AG04450 (cell line): ENCODE measurements at regions of chr7 and their contacts with region 1.

Region 1: GRCh38 chr7:129258649-129259389 is 34.0 kb downstream of the AHCYL2 start:
- DNase-seq: no peak
- H3K4me3 ChIP-seq: no peak overlapping the region
- H3K27ac ChIP-seq: no peak overlapping the region
- H3K27me3 ChIP-seq: no peaks in the 10 kb centered on the region
- CTCF ChIP-seq: no peak

Region 2: GRCh38 chr7:129176916-129177710 is 81.7 kb before region 1 on chr7:
- CTCF ChIA-PET with region 1: no interaction called
- POLR2A ChIA-PET with region 1: no interaction called
- DNase-seq: no peak
- H3K4me3 ChIP-seq: no peak overlapping the region
- H3K27ac ChIP-seq: no peak overlapping the region
- H3K27me3 ChIP-seq: peaks cover 13% of the 10 kb centered on the region
- CTCF ChIP-seq: no peak

Region 3: GRCh38 chr7:129240119-129240815 is 18.6 kb before region 1 on chr7:
- CTCF ChIA-PET with region 1: no interaction called
- POLR2A ChIA-PET with region 1: no interaction called
- DNase-seq: no peak
- H3K4me3 ChIP-seq: no peak overlapping the region
- H3K27ac ChIP-seq: no peak overlapping the region
- H3K27me3 ChIP-seq: no peaks in the 10 kb centered on the region
- CTCF ChIP-seq: no peak

Region 4: DNA sequence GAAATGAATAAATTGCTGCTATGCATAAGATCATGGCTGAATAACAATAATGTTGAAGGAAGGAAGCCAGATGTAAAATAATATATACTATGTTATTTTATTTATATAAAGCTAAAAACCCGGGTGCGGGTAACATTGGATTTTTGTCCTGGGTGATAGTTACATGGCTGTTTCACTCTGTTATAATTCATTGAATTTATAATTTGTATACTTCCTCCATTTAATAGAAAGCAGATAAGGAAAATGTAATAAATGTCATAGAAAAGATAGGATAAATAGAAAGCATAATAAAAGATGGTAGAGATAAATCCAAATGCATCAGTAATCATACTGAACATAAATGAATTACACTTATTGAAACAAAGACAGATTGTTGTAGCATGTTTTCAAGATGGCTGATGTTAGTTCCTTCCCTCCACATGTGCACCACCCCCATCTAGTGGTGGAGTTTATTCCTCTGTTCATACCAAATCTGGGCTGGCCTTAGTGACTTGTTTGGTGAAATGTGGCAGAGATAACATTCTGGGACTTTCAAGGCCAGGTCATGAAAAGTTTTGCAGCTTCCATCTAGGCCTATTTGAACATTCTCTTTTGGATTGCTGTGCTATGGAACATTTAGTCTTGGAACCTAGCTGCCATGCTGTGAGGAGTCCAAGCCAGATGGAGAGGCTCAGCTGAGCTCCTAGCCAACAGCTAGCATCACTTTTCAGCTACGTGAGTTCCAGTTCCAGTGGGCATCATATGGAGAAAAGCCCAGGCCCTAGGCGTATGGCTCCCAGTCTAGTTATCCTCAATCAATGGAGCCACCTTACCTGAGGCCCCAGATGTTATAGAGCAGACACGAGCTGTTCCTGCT is 12.9 kb after region 1 on chr7:
- CTCF ChIA-PET with region 1: interaction called, 14 read pairs
- POLR2A ChIA-PET with region 1: interaction called, 6 read pairs
- DNase-seq: peak; percentile 6
- H3K4me3 ChIP-seq: no peak overlapping the region
- H3K27ac ChIP-seq: no peak overlapping the region
- H3K27me3 ChIP-seq: no peaks in the 10 kb centered on the region
- CTCF ChIP-seq: peak; percentile 60

Region 5: GRCh38 chr7:130668257-130669084 is 1409.7 kb after region 1 on chr7 and contains the start of gene COPG2:
- CTCF ChIA-PET with region 1: no interaction called
- POLR2A ChIA-PET with region 1: interaction called, 10 read pairs
- DNase-seq: peak; percentile 38
- H3K4me3 ChIP-seq: peak within 1 kb of the TSS; percentile 78
- H3K27ac ChIP-seq: no peak within 1 kb of the TSS
- H3K27me3 ChIP-seq: no peaks in the 10 kb centered on the region
- CTCF ChIP-seq: no peak
- polyA plus RNA-seq, gene COPG2: 36.6 and 40.6 TPM in 2 replicates